ENCODE measurements at regions of chr4 and their contacts with region 1.

Region 1: DNA sequence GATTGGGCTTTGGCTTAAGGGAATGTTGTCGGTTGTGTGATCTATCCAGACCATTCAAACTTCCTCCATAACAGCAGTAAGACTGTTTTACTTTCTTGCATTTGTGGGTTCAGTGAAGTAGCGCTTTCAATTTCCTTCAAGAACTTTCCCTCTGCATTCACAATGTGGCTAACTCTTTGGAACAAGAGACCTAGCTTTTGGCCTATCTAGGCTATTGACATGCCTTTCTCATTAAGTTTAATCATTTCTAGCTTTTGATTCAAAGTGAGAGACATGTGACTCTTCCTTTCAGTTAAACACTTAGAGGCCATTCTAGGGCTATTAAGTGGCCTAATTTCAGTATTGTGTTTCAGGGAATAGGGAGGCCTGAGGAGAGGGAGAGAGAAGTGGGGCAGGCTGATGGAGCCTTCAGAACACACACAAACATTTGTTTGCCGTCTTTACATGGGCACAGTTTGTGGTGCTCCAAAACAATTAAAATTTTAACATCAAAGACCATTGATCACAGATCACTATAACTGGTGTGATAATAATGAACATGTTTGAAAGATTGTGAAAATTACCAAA is 34.1 kb downstream of the ADH5 start:
- DNase-seq: no peak
- H3K4me3 ChIP-seq: no peak overlapping the region
- H3K27ac ChIP-seq: no peak overlapping the region
- H3K4me1 ChIP-seq: 0 out of 4 replicates have a peak, but pooled peaks cover 0 to 4% of the 10 kb centered on the region in 2 experiments
- H3K27me3 ChIP-seq: no peaks in the 10 kb centered on the region
- CTCF ChIP-seq: no peak
- EP300 ChIP-seq: no peak
- RAD21 ChIP-seq: no peak

Region 2: GRCh38 chr4:98150092-98150761 is 904.3 kb before region 1 on chr4:
- CTCF ChIA-PET with region 1: interaction called, 10 read pairs
- POLR2A ChIA-PET with region 1: no interaction called
- DNase-seq: no peak
- H3K4me3 ChIP-seq: no peak overlapping the region
- H3K27ac ChIP-seq: no peak overlapping the region
- H3K4me1 ChIP-seq: no peaks in the 10 kb centered on the region; a peak in 1 of 4 replicates
- H3K27me3 ChIP-seq: no peaks in the 10 kb centered on the region
- CTCF ChIP-seq: peak; percentile 61
- EP300 ChIP-seq: no peak
- RAD21 ChIP-seq: peak; percentile 15; the same call in 1 of the 2 replicates

Region 3: DNA sequence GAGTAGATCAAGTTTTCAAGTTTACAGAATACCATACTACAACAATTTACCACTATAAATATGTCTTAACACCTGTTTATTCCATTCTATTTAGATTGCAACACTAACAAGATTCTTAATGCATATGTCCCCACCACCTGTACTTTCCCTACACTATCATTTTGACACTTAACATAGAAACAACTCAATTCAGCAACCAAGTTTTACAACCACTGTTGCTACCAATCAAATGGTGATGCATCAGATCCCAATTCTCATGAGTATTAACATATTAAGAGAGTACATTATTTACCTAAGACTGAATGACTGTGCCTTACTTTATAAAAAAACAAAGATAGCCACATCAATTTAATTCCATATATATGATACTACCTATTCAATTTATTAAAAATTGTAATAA is 175.0 kb before region 1 on chr4:
- CTCF ChIA-PET with region 1: no interaction called
- POLR2A ChIA-PET with region 1: no interaction called
- DNase-seq: no peak
- H3K4me3 ChIP-seq: no peak overlapping the region
- H3K27ac ChIP-seq: no peak overlapping the region
- H3K4me1 ChIP-seq: no peaks in the 10 kb centered on the region
- H3K27me3 ChIP-seq: no peaks in the 10 kb centered on the region
- CTCF ChIP-seq: no peak
- EP300 ChIP-seq: no peak
- RAD21 ChIP-seq: no peak

Region 4: GRCh38 chr4:98928505-98929340 is 125.8 kb before region 1 on chr4 and contains the start of gene EIF4E:
- CTCF ChIA-PET with region 1: interaction called, 17 read pairs
- POLR2A ChIA-PET with region 1: no interaction called
- DNase-seq: peak; percentile 92
- H3K4me3 ChIP-seq: peak within 1 kb of the TSS; percentile 79 to 93
- H3K27ac ChIP-seq: peak within 1 kb of the TSS; percentile 95 to 98
- H3K4me1 ChIP-seq: peaks cover 0 to 7% of the 10 kb centered on the region in 2 experiments; a peak in 2 of 4 replicates
- H3K27me3 ChIP-seq: no peaks in the 10 kb centered on the region
- CTCF ChIP-seq: peak; percentile 34
- EP300 ChIP-seq: peak; percentile 5 to 7; a peak in 1 of 4 replicates
- RAD21 ChIP-seq: no peak
- polyA plus RNA-seq, gene EIF4E: 59.8 and 67.6 TPM in 2 replicates

Region 5: GRCh38 chr4:98939892-98940298 is 114.6 kb before region 1 on chr4:
- CTCF ChIA-PET with region 1: interaction called, 18 read pairs
- POLR2A ChIA-PET with region 1: no interaction called
- DNase-seq: peak; percentile 42
- H3K4me3 ChIP-seq: no peak overlapping the region
- H3K27ac ChIP-seq: no peak overlapping the region
- H3K4me1 ChIP-seq: no peaks in the 10 kb centered on the region
- H3K27me3 ChIP-seq: no peaks in the 10 kb centered on the region
- CTCF ChIP-seq: peak; percentile 87
- EP300 ChIP-seq: no peak
- RAD21 ChIP-seq: peak; percentile 69

Region 6: DNA sequence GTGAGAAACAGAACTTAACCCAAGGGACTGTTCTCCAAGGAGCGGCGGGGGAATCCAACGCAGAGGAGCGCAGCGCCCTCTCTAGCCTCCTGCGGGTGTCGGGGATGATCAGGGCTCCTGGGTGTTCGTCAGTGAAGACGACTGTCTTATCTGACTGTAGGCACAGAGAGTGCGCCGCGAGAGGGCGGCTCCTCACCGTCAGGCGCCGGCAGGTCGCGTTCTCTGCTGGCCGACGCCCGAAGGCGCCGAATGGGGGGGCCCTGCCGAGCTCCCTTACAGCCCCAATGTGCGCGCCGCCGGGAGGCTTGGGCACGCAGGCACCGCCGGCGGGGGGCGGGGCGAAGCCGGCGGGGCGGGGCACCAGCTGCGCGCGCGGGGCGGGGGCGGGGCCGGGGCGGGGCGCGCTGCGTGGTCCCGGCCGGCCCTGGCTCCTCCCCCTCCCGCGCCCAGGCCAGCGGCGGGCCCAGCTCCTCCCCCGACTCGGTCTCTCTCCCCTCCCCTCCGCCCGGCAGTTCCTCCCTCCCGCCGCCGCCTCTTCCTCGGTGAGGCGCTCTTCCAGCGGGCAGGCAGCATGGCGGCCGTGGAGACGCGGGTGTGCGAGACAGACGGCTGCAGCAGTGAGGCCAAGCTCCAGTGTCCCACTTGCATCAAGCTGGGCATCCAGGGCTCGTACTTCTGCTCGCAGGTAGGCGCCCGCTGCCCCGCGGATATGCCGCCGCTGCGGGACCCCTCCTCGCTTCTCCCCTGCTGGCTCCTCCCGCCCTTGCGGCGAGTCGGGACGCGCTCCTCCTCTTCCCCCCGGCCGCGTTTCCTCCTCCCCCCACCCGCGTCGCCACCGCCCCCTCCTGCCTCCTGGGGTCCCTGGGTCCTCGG is 59.1 kb before region 1 on chr4 and contains the start of gene METAP1:
- CTCF ChIA-PET with region 1: interaction called, 46 read pairs
- POLR2A ChIA-PET with region 1: interaction called, 3 read pairs
- DNase-seq: peak; percentile 98
- H3K4me3 ChIP-seq: peak within 1 kb of the TSS; percentile 89 to 95
- H3K27ac ChIP-seq: peak within 1 kb of the TSS; percentile 74 to 93
- H3K4me1 ChIP-seq: peaks cover 0 to 6% of the 10 kb centered on the region in 2 experiments; a peak in 2 of 4 replicates
- H3K27me3 ChIP-seq: no peaks in the 10 kb centered on the region
- CTCF ChIP-seq: peak; percentile 64
- EP300 ChIP-seq: peak in 1 of 2 experiments; percentile 23; a peak in 1 of 4 replicates
- RAD21 ChIP-seq: peak; percentile 72
- polyA plus RNA-seq, gene METAP1: 41.0 and 51.2 TPM in 2 replicates

Region 7: GRCh38 chr4:99043346-99043745 is 11.2 kb before region 1 on chr4:
- CTCF ChIA-PET with region 1: interaction called, 19 read pairs
- POLR2A ChIA-PET with region 1: no interaction called
- DNase-seq: no peak
- H3K4me3 ChIP-seq: no peak overlapping the region
- H3K27ac ChIP-seq: no peak overlapping the region
- H3K4me1 ChIP-seq: no peaks in the 10 kb centered on the region
- H3K27me3 ChIP-seq: no peaks in the 10 kb centered on the region
- CTCF ChIP-seq: no peak
- EP300 ChIP-seq: no peak
- RAD21 ChIP-seq: no peak

Region 8: DNA sequence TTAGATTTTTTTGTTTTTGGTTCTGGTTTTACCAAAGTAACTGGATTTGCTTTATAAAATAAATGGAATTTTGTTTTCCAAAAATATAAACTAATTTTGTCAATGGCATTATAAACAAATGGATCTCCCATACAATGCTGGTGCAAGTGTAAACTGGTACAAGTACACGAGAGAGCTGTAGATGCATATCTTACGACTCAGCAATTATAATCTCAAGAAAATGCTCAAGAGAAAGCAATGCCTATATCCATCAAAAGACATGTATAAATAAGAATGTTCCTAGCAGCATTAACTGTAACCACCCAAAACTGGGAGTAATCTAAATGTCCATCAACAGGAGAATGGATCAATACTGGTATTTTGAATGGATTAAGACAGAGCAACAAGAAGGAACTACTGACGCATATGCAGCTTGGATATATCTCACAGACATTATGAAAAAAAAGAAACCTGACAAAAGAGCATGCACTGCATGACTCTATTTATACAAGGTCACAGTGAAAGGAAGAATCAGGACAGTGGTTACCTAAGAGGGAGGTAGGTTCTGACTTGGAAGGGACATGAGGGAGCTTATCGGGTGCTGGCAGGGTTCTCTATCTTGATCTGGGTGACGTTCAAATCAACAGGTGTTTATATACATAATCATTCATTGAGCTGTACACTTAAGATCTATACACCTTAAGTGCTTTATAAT is 24.6 kb after region 1 on chr4:
- CTCF ChIA-PET with region 1: interaction called, 11 read pairs
- POLR2A ChIA-PET with region 1: no interaction called
- DNase-seq: no peak
- H3K4me3 ChIP-seq: no peak overlapping the region
- H3K27ac ChIP-seq: no peak overlapping the region
- H3K4me1 ChIP-seq: no peaks in the 10 kb centered on the region
- H3K27me3 ChIP-seq: no peaks in the 10 kb centered on the region
- CTCF ChIP-seq: no peak
- EP300 ChIP-seq: no peak
- RAD21 ChIP-seq: no peak